ENCODE measurements at regions of chr2 and their contacts with region 1.

Region 1: DNA sequence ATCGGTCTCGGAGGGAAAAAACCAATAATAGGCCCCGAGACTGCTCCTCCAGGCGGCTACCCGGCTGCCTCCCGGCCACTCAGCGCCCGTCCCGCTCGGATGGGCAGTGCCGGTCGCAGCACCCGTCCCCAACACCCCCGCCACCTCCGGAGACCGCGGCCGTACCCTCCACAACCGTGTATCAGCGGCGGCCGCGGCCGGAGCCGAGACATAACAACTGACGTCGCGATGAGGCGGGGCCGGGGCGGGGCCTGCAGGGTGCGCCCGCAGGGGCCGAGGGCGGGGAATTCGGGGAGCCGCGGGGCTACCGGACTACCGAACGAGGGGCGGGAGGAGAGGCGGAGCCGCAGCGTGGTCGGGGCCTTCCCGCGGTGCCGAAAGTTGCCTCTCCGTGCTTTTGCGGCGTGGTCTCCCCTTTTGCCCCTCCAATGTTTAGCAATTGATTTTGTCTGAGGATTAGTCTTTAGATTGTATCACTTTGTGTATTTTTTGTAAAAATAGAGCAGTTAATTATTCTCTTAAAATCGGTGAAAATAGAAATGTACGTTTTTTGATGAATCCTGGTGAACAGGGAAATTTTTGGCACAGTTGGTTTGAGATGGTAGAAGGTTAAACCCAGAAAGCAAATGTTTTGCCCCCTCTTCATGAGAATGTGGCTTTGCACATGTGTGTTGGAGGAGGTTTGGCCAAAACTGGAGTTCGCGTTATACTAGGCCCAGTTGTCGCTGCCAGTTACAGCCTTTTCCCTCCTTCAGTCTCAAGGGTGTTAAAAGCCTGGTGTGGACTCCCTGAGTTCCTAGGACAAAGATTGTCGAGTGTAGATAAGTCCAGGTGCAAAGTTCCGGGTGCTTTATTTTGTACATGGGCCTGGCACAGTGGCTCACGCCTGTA is at the start of gene RNF103:
- DNase-seq: peak; percentile 83 to 98
- H3K4me3 ChIP-seq: peak within 1 kb of the TSS; percentile 85 to 94
- H3K27ac ChIP-seq: peak within 1 kb of the TSS; percentile 94 to 100
- H3K4me1 ChIP-seq: peaks cover 3 to 14% of the 10 kb centered on the region in 2 donors
- H3K27me3 ChIP-seq: no peaks in the 10 kb centered on the region
- CTCF ChIP-seq: no peak
- total RNA-seq, gene RNF103: 20.5 TPM

Region 2: GRCh38 chr2:86221066-86221684 is 402.7 kb before region 1 on chr2:
- intact Hi-C with region 1: loop called (anchors 5 kb)
- DNase-seq: no peak
- H3K4me3 ChIP-seq: no peak overlapping the region
- H3K27ac ChIP-seq: peak overlapping the region; percentile 89 to 93
- H3K4me1 ChIP-seq: peaks cover 25 to 37% of the 10 kb centered on the region in 2 donors
- H3K27me3 ChIP-seq: no peaks in the 10 kb centered on the region
- CTCF ChIP-seq: peak; percentile 79 to 97 (median 91)

Region 3: DNA sequence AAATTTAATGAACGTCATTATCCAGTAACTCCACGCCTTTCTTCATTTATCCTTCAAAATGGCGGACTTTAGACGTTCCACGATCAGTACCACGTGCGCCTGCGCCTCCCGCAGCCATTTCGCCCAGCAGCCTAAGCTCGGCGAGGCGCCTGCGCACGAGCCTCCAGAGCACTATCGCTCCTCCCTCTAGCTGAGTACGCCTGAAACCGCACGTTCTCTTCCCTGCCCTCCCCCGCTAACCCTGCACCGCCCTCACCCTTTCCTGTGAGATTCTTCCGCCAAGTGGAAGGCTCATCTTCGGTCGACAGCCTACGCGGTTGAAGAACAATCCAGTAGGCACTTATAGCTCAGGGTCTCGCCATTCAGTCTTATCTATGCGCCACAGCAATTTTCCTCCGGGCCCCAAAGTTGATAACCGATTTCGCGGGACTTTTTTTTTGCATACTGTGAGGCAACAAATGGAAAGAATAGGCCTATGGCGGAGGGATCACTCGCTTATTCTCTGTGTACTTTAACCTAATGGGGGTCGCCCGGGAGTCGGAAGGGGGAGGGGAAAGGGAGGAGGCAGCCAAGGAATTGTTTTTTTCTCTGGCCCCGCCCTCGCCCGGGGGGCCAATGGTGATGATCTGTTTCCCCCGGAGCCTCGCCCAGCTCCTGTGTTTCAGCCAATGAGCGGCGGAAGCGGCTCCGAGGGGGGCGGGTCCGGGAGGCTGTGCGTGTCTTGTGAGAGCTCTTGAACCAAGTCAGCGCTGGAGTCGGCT is 183.1 kb before region 1 on chr2 and contains the start of gene KDM3A:
- intact Hi-C with region 1: loop called (anchors 2 kb)
- DNase-seq: peak; percentile 100
- H3K4me3 ChIP-seq: peak within 1 kb of the TSS; percentile 88 to 97
- H3K27ac ChIP-seq: peak within 1 kb of the TSS; percentile 94 to 99
- H3K4me1 ChIP-seq: peaks cover 3 to 30% of the 10 kb centered on the region in 2 donors
- H3K27me3 ChIP-seq: no peaks in the 10 kb centered on the region
- CTCF ChIP-seq: no peak
- total RNA-seq, gene KDM3A: 18.4 TPM

Region 4: GRCh38 chr2:86498468-86499250 is 125.2 kb before region 1 on chr2:
- intact Hi-C with region 1: no loop called
- DNase-seq: no peak
- H3K4me3 ChIP-seq: no peak overlapping the region
- H3K27ac ChIP-seq: no peak overlapping the region
- H3K4me1 ChIP-seq: no peaks in the 10 kb centered on the region
- H3K27me3 ChIP-seq: no peaks in the 10 kb centered on the region
- CTCF ChIP-seq: no peak

Region 5: DNA sequence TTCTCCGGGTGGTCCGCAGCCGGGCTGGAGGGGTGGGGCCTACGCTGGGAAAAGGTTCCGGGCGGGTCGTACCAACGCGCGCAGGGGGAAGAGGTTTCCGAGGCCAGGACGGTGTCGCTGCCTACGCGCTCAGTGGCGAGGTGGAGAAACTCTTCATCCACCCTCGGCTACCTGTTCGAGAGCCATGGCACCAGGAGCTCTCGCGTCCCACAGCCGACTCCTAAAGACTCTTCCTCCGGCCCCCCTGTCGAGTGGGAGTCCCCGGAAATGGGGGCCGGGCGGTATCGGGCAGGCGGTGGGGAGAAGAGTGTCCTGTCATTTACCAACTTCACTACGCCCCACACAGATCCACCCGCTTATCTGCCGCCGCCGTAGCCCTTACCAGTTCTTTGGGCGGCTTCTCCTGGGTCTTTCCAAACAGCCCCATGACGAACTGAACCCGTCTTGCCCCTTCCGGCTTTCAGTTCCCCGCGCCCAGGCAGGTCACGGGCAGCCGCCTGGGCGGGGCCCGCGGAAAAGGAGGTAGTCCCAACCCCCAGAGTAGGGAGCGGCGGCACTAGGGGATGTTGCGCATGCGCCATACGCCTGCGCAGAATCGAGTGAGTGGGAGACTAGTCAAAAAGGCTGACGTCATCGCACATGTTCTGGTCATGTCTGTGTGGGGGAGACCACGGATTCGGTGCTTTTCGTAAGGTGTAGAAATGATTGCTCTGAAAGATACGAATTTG is 60.8 kb before region 1 on chr2 and contains the start of gene CHMP3:
- intact Hi-C with region 1: loop called (anchors 1 kb)
- DNase-seq: peak; percentile 94 to 98
- H3K4me3 ChIP-seq: peak within 1 kb of the TSS; percentile 70 to 84
- H3K27ac ChIP-seq: peak within 1 kb of the TSS; percentile 94 to 95
- H3K4me1 ChIP-seq: peaks cover 0 to 14% of the 10 kb centered on the region in 2 donors
- H3K27me3 ChIP-seq: no peaks in the 10 kb centered on the region
- CTCF ChIP-seq: no peak
- total RNA-seq, gene CHMP3: 69.3 TPM

Measured in ascending aorta (tissue), 2 donors.